ENCODE measurements at regions of chr14 and their contacts with region 1.

Region 1: GRCh38 chr14:20617138-20618003 is 24.1 kb downstream of the OR6S1 start:
- DNase-seq: no peak
- H3K4me3 ChIP-seq: no peak overlapping the region
- H3K27ac ChIP-seq: no peak overlapping the region
- H3K4me1 ChIP-seq: peaks cover 0 to 46% (median 31%) of the 10 kb centered on the region in 4 donors
- H3K27me3 ChIP-seq: no peaks in the 10 kb centered on the region
- CTCF ChIP-seq: no peak
- EP300 ChIP-seq: no peak
- POLR2A ChIP-seq: no peak

Region 2: GRCh38 chr14:20684662-20685456 is 67.5 kb after region 1 on chr14:
- intact Hi-C with region 1: loop called (anchors 5 kb)
- DNase-seq: peak; percentile 46 to 79
- H3K4me3 ChIP-seq: peak overlapping the region; percentile 52 to 78 (median 69)
- H3K27ac ChIP-seq: peak overlapping the region; percentile 96 to 100 (median 100)
- H3K4me1 ChIP-seq: peaks cover 25 to 73% (median 59%) of the 10 kb centered on the region in 4 donors
- H3K27me3 ChIP-seq: no peaks in the 10 kb centered on the region
- CTCF ChIP-seq: no peak
- EP300 ChIP-seq: no peak
- POLR2A ChIP-seq: peak in 1 of 4 donors; percentile 42

Region 3: DNA sequence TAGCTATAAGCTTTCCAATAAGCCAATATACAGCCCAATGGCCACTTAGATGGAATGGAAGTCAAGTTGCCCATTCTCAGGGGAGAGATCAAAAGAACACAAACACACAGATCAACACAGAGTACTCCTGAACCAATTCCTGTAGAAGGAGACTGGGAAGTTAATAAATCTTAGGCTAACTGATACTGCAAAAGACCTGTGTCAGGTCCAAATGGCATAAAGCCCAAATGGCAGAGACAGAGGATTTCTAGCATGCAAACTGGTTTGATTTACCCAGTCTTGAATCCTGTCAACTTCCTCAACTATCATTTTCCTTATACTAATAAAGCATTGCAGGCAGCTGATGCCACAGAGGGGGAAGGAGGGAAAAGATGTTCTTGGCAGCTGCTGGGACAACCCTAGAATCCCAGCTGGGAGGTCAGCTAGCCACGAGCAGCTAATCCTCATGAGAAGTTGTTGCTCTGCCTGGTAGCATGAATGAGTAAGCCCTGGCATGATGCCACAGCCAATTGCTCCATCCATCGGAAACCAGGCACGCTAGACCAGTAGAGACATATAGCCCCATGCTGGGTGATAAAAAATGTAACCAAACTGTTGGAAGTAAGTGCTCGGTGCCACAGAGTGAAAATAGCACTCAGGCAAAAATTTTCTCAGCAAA is 97.4 kb after region 1 on chr14:
- intact Hi-C with region 1: no loop called
- DNase-seq: peak; percentile 46 to 91
- H3K4me3 ChIP-seq: no peak overlapping the region
- H3K27ac ChIP-seq: peak overlapping the region; percentile 47 to 91 (median 79)
- H3K4me1 ChIP-seq: peaks cover 12 to 56% (median 29%) of the 10 kb centered on the region in 4 donors
- H3K27me3 ChIP-seq: no peaks in the 10 kb centered on the region
- CTCF ChIP-seq: no peak
- EP300 ChIP-seq: no peak
- POLR2A ChIP-seq: no peak

Measured in stomach (tissue), 19 donors.